WTC11 (cell line): ENCODE measurements at regions of chr7 and their contacts with region 1.

Region 1: DNA sequence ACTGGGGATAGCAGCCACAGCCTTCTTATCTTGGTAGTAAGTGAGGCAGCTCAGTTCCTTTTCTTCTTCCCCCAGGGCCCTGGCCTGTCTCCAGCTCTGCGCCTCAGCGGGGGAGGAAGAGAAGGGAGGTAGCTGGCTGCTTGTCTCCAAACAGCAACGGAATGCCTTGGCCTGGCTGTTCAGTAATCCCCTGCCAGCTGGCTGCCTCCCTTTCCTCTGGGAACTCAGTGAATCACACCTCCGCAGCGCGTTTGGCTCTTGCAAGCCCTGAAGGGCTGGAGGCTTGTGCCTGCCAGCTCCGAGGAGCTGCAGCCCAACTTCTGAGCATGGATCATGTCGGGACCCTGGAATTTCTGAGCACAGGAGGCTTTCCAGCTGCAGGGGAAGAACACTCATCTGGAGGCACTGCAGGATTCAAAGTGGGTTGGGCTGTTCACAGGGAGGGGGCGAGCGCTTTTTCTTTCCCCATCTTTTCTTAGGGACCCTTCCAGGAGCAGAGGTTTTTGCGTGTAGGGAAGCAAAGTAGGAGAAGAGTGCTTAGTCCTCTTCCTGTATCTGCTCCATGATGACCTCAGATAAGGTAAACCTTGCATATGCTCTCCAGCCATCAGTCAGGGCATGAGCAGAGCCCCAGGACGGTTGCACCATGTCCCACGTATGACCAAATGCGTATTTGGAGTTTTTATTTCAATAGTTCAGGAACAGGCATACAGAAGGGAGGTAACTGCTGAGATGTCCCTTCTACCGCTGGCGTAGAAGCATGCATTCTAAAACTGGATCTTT is 253.2 kb upstream of the INHBA start:
- DNase-seq: peak; percentile 64
- ATAC-seq: peak; percentile 91
- H3K4me3 Mint-ChIP-seq: no peak overlapping the region
- H3K27ac Mint-ChIP-seq: no peak overlapping the region
- H3K4me1 Mint-ChIP-seq: peaks cover 31% of the 10 kb centered on the region
- H3K27me3 Mint-ChIP-seq: no peaks in the 10 kb centered on the region; the same call in 1 of the 2 replicates
- CTCF ChIP-seq: no peak

Region 2: DNA sequence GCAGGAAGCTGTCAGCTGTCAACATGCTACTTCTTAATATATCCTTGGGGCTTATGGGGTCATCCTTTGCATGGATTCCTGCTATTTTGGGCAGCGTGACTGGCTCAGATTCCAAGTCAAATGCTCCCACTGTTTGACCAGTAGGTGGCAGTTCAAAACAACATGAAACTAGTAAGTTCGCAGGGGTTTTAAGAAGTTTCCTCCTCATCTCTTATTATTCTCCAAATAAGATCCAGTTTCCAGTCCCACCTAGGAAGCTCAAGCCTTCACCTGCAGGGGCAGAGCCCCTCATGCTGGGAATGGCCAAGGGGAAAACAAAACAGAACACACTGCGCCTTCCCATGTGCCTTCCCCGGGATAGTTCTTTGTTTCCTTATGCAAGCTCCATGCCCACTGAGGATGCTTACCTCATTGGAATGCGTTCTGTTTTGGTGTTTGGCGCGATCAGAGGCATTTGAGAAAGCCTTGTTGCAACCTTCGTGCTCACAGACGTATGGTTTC is 21.1 kb after region 1 on chr7:
- CTCF ChIA-PET with region 1: interaction called, 10 read pairs
- POLR2A ChIA-PET with region 1: no interaction called
- DNase-seq: no peak
- ATAC-seq: peak; percentile 62
- H3K4me3 Mint-ChIP-seq: no peak overlapping the region
- H3K27ac Mint-ChIP-seq: peak overlapping the region; percentile 75; the same call in 1 of the 2 replicates
- H3K4me1 Mint-ChIP-seq: peaks cover 14% of the 10 kb centered on the region
- H3K27me3 Mint-ChIP-seq: no peaks in the 10 kb centered on the region
- CTCF ChIP-seq: peak; percentile 58; the same call in 1 of the 2 replicates